Esophagus squamous epithelium (tissue), 5 donors: ENCODE measurements at regions of chr20 and their contacts with region 1.

Region 1: GRCh38 chr20:46132705-46133120 is 14.6 kb downstream of the CD40 start:
- DNase-seq: no peak
- H3K4me3 ChIP-seq: no peak overlapping the region
- H3K27ac ChIP-seq: no peak overlapping the region
- H3K4me1 ChIP-seq: peaks cover 0 to 41% (median 9%) of the 10 kb centered on the region in 3 donors
- H3K27me3 ChIP-seq: peaks cover 0 to 67% (median 0%) of the 10 kb centered on the region in 4 donors
- CTCF ChIP-seq: peak; percentile 78 to 90 (median 81)
- POLR2A ChIP-seq: no peak

Region 2: GRCh38 chr20:45672765-45673164 is 459.9 kb before region 1 on chr20:
- intact Hi-C with region 1: no loop called
- DNase-seq: no peak
- H3K4me3 ChIP-seq: no peak overlapping the region
- H3K27ac ChIP-seq: no peak overlapping the region
- H3K4me1 ChIP-seq: no peaks in the 10 kb centered on the region
- H3K27me3 ChIP-seq: no peaks in the 10 kb centered on the region
- CTCF ChIP-seq: no peak
- POLR2A ChIP-seq: no peak

Region 3: DNA sequence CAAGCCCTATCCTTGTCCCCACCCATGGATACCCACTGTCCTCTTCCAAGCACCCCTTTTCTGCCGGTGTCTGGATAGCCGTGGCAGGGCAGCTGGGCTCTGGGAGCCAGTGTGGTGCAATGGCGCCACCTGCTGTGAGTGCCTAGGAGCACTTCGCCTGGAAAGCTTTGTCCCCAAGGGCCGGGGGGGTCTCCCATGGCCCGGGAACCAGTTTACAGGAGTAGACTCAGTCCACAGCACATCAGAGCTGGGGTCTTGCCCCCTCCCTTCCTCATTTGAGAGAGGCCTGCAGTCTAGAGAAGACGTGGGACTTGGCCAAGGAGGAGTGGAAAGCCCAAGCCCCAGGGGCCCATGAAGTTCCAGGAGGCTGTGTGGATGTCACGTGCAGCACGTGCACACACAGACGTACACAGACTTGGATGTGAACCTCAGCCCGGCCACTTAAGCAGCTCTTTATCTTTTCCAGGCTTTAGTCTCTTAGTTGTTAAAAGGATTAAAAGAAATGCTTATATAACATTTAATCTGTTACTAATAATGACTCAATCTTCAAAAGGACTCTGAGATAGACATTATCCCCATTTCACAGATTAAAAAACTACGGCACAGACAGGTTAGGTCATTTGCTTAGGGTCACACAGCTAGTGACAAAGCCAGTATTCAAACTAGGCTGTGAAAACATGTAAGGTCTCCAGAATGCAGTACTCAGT is 216.5 kb after region 1 on chr20:
- intact Hi-C with region 1: loop called (anchors 10 kb)
- DNase-seq: no peak
- H3K4me3 ChIP-seq: no peak overlapping the region
- H3K27ac ChIP-seq: no peak overlapping the region
- H3K4me1 ChIP-seq: peaks cover 0 to 20% (median 6%) of the 10 kb centered on the region in 3 donors
- H3K27me3 ChIP-seq: no peaks in the 10 kb centered on the region
- CTCF ChIP-seq: peak; percentile 50 to 82 (median 71)
- POLR2A ChIP-seq: no peak